ENCODE measurements at regions of chr15 and their contacts with region 1.

Region 1: DNA sequence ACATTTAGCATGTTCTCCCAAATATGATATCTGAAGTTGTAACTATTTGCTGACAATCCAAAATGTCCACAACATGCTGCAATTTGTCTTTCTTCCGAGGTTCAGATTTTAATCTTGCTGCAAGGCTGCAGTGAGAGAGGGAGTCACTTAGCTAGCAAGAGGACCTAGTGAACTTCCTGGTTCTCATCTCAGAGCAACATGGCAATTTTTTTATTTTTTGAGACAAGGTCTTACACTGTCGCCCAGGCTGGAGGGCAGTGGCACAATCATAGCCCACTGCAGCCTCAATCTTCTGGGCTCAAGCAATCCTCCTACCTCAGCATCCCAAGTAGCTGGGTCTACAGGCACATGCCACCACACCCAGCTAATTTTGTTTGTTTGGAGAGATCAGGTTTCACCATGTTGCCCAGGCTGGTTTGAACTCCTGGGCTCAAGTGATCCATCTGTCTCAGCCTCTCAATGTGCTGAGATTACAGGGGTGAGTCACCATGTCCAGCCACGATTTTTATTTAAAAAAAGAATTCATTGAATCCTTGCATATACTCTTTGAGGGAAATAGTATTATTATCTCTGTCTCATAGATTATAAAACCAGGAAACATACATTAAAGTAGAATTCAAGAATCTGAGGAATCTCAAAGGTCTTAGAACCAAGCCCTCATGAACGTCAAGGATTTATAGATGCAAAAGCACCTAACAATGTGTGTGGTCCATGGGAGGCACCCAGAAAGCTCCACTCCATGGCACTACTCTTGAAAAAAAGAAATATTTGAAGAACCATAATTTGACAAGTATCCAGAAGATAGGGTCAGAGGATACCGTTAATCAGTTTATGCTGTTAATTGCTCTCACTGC is 9.1 kb downstream of the HDC start:
- DNase-seq: peak; percentile 53
- H3K4me3 Mint-ChIP-seq: no peak overlapping the region
- H3K27ac Mint-ChIP-seq: no peak overlapping the region
- H3K4me1 Mint-ChIP-seq: peaks cover 20% of the 10 kb centered on the region
- H3K27me3 Mint-ChIP-seq: no peaks in the 10 kb centered on the region
- CTCF ChIP-seq: no peak

Region 2: DNA sequence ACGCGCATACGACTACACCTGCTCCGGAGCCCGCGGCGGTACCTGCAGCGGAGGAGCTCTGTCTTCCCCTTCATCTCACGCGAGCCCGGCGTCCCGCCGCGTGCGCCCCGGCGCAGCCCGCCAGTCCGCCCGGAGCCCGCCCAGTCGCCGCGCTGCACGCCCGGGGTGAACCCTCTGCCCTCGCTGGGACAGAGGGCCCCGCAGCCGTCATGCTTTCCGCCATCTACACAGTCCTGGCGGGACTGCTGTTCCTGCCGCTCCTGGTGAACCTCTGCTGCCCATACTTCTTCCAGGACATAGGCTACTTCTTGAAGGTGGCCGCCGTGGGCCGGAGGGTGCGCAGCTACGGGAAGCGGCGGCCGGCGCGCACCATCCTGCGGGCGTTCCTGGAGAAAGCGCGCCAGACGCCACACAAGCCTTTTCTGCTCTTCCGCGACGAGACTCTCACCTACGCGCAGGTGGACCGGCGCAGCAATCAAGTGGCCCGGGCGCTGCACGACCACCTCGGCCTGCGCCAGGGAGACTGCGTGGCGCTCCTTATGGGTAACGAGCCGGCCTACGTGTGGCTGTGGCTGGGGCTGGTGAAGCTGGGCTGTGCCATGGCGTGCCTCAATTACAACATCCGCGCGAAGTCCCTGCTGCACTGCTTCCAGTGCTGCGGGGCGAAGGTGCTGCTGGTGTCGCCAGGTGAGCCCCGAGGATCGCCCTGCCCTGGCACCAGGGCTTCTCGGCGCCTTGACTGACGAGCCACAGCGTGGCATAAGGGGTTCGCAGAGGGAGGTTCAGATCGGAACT is 74.0 kb before region 1 on chr15:
- CTCF ChIA-PET with region 1: no interaction called
- intact Hi-C with region 1: loop called (anchors 5 kb)
- DNase-seq: peak; percentile 32
- H3K4me3 Mint-ChIP-seq: peak overlapping the region; percentile 97
- H3K27ac Mint-ChIP-seq: peak overlapping the region; percentile 24
- H3K4me1 Mint-ChIP-seq: peaks cover 18% of the 10 kb centered on the region
- H3K27me3 Mint-ChIP-seq: no peaks in the 10 kb centered on the region
- CTCF ChIP-seq: no peak

Region 3: GRCh38 chr15:50354838-50355618 is 98.6 kb after region 1 on chr15 and contains the start of gene GABPB1:
- CTCF ChIA-PET with region 1: no interaction called
- intact Hi-C with region 1: no loop called
- DNase-seq: peak; percentile 93
- H3K4me3 Mint-ChIP-seq: peak within 1 kb of the TSS; percentile 71
- H3K27ac Mint-ChIP-seq: peak within 1 kb of the TSS; percentile 64
- H3K4me1 Mint-ChIP-seq: peaks cover 41% of the 10 kb centered on the region
- H3K27me3 Mint-ChIP-seq: no peaks in the 10 kb centered on the region
- CTCF ChIP-seq: no peak
- total RNA-seq, gene GABPB1: 25.6 and 33.0 TPM in 2 replicates